WTC11 (cell line): ENCODE measurements at regions of chr14 and their contacts with region 1.

Region 1: GRCh38 chr14:100303177-100303576 is 3.1 kb downstream of the SLC25A29 start:
- DNase-seq: no peak
- ATAC-seq: no peak
- H3K4me3 Mint-ChIP-seq: no peak overlapping the region
- H3K27ac Mint-ChIP-seq: no peak overlapping the region
- H3K4me1 Mint-ChIP-seq: peaks cover 29% of the 10 kb centered on the region
- H3K27me3 Mint-ChIP-seq: peaks cover 6% of the 10 kb centered on the region
- CTCF ChIP-seq: peak; percentile 59

Region 2: DNA sequence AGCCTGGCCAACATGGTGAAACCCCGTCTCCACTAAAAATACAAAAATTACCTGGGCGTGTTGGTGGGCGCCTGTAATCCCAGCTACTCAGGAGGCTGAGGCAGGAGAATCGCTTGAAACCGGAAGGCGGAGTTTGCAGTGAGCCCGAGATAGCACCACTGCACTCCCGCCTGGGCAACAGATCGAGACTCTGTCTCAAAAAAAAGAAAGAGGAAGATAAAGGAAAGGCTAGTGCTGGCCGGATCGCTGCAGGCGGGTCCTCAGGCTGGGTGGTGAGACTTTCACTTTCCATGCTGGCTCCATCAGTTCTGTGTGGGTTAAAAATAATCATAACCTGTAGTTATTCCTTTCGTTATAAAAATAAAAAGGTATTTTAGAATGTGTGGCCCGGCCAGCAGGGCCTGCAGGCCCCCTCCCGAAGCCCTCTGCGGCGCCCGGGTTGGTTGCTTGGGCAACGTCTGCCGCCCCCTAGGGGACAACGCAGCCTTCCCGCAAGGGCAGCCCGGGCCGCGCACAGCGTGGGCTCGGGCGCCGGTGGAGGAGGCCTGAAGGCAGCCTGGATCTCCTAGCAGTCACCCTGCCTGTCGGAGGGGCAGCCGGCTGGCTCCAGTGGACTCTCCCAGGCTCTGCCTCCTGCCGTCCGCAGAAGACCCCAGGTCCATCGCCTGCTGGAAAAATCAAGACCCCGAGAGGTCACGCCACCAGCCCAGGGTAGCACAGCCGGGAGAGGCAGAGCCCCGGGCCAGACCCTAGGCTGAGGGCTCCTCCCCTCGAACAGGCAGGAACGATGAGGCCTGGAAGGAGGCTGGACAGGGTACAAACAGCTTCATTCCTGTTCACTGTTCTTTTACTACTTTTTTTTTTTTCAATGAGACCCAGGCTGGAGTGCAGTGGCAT is 15.0 kb after region 1 on chr14:
- CTCF ChIA-PET with region 1: interaction called, 12 read pairs
- POLR2A ChIA-PET with region 1: no interaction called
- DNase-seq: peak; percentile 82
- ATAC-seq: peak; percentile 92
- H3K4me3 Mint-ChIP-seq: no peak overlapping the region
- H3K27ac Mint-ChIP-seq: no peak overlapping the region
- H3K4me1 Mint-ChIP-seq: peaks cover 6% of the 10 kb centered on the region
- H3K27me3 Mint-ChIP-seq: no peaks in the 10 kb centered on the region
- CTCF ChIP-seq: peak; percentile 68

Region 3: GRCh38 chr14:100369019-100369418 is 65.8 kb after region 1 on chr14:
- CTCF ChIA-PET with region 1: no interaction called
- POLR2A ChIA-PET with region 1: no interaction called
- DNase-seq: no peak
- ATAC-seq: no peak
- H3K4me3 Mint-ChIP-seq: no peak overlapping the region
- H3K27ac Mint-ChIP-seq: no peak overlapping the region
- H3K4me1 Mint-ChIP-seq: peaks cover 23% of the 10 kb centered on the region
- H3K27me3 Mint-ChIP-seq: no peaks in the 10 kb centered on the region
- CTCF ChIP-seq: no peak